ENCODE measurements at regions of chr5 and their contacts with region 1.

Region 1: GRCh38 chr5:147558826-147559225 is 49.0 kb upstream of the DPYSL3 start:
- DNase-seq: peak in 1 of 2 donors; percentile 32
- ATAC-seq: peak; percentile 27

Region 2: GRCh38 chr5:147223948-147224791 is 334.7 kb before region 1 on chr5:
- intact Hi-C with region 1: loop called in 1 of 2 experiments (anchors 5 kb)
- DNase-seq: peak in 1 of 2 donors; percentile 19
- ATAC-seq: peak; percentile 72

Region 3: GRCh38 chr5:147290261-147290660 is 268.6 kb before region 1 on chr5:
- intact Hi-C with region 1: no loop called
- DNase-seq: no peak
- ATAC-seq: no peak

Region 4: DNA sequence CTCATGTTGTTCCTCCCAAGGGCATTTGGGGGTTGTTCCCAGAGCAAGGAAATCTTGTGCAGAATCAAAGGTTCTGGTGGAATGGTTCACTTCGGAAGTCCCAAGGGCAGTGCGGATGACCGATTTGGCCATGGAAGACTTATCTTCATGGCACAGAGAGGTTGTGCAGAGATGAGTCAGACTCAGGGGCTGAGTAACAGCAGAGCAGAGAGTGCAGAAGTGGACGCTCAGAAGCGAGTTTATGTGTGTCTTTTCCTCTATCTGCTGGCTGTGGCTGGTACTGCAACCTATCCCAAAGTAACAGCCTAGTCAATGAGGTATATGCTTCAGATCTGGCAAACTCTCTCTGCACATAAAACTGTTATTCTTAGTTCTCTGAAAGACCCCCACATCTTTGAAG is 167.0 kb before region 1 on chr5:
- intact Hi-C with region 1: loop called in 1 of 2 experiments (anchors 10 kb)
- DNase-seq: peak in 1 of 2 donors; percentile 46
- ATAC-seq: peak; percentile 90

Region 5: DNA sequence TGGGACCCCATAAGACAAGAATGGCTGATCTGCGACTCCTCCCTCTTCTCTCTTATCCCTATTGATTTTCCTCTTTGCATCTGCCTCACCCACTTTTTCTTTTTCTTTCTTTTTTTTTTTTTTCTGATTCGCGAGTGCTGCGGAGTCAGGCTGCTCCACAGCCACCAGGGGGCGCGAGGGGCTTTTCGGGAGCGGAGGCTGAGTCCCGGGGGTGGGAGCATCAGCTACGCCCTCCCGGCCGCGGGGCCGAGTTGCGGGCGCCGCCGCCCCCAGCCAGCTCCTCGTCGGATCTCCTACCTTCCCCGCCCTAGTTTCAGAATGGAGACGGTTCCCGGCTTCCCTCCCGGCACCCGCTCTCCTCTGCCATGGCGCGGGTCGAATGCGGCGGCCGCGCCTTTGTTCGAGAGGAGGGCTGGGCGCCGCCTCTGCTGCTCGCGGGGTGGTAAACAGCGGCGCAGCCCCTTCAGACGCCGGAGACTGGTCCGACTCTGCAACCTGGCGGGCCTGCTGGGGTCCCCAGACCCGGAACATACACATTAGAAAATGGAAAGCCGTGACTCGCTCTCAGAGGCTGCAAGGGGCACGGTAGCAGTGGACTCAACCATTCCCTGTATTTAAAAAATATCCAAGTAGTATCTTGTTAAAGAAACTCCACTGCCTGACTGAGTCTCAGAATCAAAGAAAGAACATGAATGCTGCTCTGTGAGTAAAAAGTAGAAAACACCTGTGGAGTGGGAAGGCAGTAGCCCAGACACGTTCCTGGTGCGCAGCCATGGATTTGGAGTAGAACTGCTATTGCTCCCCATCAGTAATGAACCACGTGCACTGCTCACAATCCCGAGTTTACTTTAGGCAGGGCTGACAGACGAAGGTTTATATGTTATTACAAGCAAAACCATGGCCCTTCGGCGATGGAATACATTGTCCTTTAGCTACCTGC is 104.7 kb before region 1 on chr5:
- intact Hi-C with region 1: loop called in 1 of 2 experiments (anchors 5 kb)
- DNase-seq: peak; percentile 75 to 90
- ATAC-seq: peak; percentile 94

Region 6: DNA sequence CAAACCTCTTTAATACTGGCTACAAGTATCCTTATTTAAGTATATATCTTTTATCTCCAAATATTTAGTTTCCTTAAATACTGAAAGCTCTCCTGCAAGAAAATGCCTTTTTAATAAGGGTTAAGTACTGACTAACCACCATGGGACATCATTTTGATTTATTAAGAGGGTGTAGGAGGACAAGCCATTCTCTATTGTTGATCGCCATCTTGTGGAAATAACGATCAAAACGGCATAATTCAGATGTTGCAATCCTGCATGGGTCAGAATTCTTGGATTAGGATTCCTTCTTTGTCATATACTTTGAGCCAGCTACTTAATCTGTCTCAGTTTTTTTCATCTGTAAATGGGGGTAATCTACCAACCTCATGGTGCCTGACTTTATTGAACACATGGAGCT is 376.2 kb after region 1 on chr5:
- intact Hi-C with region 1: no loop called
- DNase-seq: no peak
- ATAC-seq: peak; percentile 78

Measured in left colon (tissue), 2 donors.